ENCODE measurements at regions of chrX and their contacts with region 1.

Region 1: GRCh38 chrX:31820430-31821210 is 748.8 kb upstream of the FTHL17 start:
- DNase-seq: no peak
- H3K4me3 Mint-ChIP-seq: no peak overlapping the region
- H3K27ac Mint-ChIP-seq: no peak overlapping the region
- H3K4me1 Mint-ChIP-seq: peaks cover 15% of the 10 kb centered on the region
- H3K27me3 Mint-ChIP-seq: no peaks in the 10 kb centered on the region
- CTCF ChIP-seq: no peak

Region 2: DNA sequence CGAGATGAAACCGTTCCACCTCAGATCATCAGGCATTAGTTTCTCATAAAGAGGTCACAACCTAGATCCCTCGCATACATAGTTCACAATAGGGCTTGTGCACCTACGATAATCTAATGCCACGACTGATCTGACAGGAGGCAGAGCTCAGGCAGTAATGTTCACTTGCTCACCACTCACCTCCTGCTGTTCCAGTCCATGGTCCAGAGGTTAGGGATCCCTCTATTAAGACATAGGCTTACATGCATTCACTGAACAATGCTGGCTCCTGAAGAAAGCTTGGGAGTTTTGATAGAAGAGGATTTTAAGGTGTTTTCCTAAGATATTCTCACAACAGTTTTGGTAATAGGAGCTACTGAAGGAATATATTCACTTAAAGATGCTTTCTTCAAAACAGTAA is 512.7 kb before region 1 on chrX:
- CTCF ChIA-PET with region 1: no interaction called
- intact Hi-C with region 1: no loop called
- DNase-seq: no peak
- H3K4me3 Mint-ChIP-seq: no peak overlapping the region
- H3K27ac Mint-ChIP-seq: no peak overlapping the region
- H3K4me1 Mint-ChIP-seq: no peaks in the 10 kb centered on the region
- H3K27me3 Mint-ChIP-seq: no peaks in the 10 kb centered on the region
- CTCF ChIP-seq: no peak

Region 3: DNA sequence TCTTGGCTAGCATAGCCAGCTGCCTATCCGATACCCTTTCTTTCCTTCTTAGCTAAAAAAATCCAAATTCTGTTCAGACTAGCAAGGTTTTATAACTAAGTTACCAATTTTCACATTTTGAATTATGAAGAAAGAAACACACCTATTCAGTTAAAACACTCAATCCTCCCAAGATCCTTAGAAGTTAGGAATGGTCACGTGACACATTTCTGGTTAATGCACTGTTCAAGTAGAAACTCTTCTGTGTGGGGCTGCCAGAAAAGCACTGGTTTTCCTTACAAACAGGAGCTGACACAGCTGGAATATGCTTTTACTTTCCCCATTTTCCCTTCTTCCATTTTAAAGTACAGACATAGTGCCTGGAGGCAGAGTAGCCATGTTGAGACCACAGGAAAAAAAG is 58.7 kb before region 1 on chrX:
- CTCF ChIA-PET with region 1: no interaction called
- intact Hi-C with region 1: no loop called
- DNase-seq: no peak
- H3K4me3 Mint-ChIP-seq: no peak overlapping the region
- H3K27ac Mint-ChIP-seq: no peak overlapping the region
- H3K4me1 Mint-ChIP-seq: no peaks in the 10 kb centered on the region
- H3K27me3 Mint-ChIP-seq: no peaks in the 10 kb centered on the region
- CTCF ChIP-seq: no peak

Region 4: GRCh38 chrX:31931225-31931624 is 110.6 kb after region 1 on chrX:
- CTCF ChIA-PET with region 1: no interaction called
- intact Hi-C with region 1: loop called (anchors 5 kb)
- DNase-seq: peak; percentile 28
- H3K4me3 Mint-ChIP-seq: no peak overlapping the region
- H3K27ac Mint-ChIP-seq: peak overlapping the region; percentile 49
- H3K4me1 Mint-ChIP-seq: peaks cover 14% of the 10 kb centered on the region
- H3K27me3 Mint-ChIP-seq: no peaks in the 10 kb centered on the region
- CTCF ChIP-seq: no peak

Region 5: DNA sequence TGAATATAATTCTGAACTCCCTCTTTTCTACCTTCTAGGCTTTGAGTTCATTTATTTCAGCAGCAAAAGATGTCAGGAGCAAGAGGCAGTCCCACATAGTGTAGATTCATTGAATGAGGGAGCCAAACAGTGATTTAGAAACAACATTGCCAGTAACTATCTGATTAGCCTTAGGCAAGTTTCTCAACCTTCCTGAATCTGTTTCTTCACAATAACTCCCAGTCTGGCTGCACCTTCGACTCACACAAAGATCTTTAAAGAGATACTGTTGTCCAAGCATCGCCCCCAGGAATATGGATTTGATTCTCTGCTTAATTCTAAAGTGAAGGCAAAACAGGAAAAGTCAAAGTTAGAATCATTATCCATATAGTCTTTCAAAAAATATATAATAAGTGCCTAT is 364.5 kb after region 1 on chrX:
- CTCF ChIA-PET with region 1: no interaction called
- intact Hi-C with region 1: no loop called
- DNase-seq: no peak
- H3K4me3 Mint-ChIP-seq: no peak overlapping the region
- H3K27ac Mint-ChIP-seq: no peak overlapping the region
- H3K4me1 Mint-ChIP-seq: no peaks in the 10 kb centered on the region
- H3K27me3 Mint-ChIP-seq: no peaks in the 10 kb centered on the region
- CTCF ChIP-seq: no peak